ENCODE measurements at regions of chr5 and their contacts with region 1.

Region 1: GRCh38 chr5:29089591-29090130 is 2051.3 kb upstream of the CDH9 start:
- DNase-seq: no peak
- H3K4me3 ChIP-seq: no peak overlapping the region
- H3K27ac ChIP-seq: no peak overlapping the region
- H3K4me1 ChIP-seq: no peaks in the 10 kb centered on the region
- H3K27me3 ChIP-seq: no peaks in the 10 kb centered on the region
- CTCF ChIP-seq: no peak
- EP300 ChIP-seq: no peak
- POLR2A ChIP-seq: no peak

Region 2: GRCh38 chr5:29077451-29077850 is 12.2 kb before region 1 on chr5:
- in situ Hi-C with region 1: no loop called
- intact Hi-C with region 1: loop called (anchors 1 kb)
- DNase-seq: no peak
- H3K4me3 ChIP-seq: no peak overlapping the region
- H3K27ac ChIP-seq: no peak overlapping the region
- H3K4me1 ChIP-seq: no peaks in the 10 kb centered on the region
- H3K27me3 ChIP-seq: no peaks in the 10 kb centered on the region
- CTCF ChIP-seq: no peak
- EP300 ChIP-seq: no peak
- POLR2A ChIP-seq: no peak

Region 3: DNA sequence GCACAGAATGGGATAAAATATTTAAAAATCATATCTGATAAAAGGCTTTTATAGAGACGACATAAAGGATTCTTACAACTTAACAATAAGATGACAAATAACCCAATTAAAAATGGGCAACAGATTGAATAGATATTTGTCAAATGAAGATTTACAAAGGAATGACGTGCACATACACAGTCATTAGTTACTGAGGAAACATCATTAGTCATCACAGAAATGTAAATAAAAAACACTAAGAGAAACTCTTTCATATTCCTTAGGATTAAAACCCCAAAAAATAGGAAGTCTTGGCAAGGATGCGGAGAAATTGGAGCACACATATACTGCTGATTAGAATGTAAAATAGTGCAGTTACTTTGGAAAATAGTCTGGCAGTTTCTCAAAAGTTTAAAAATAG is 217.8 kb after region 1 on chr5:
- in situ Hi-C with region 1: no loop called
- intact Hi-C with region 1: no loop called
- DNase-seq: no peak
- H3K4me3 ChIP-seq: no peak overlapping the region
- H3K27ac ChIP-seq: no peak overlapping the region
- H3K4me1 ChIP-seq: no peaks in the 10 kb centered on the region
- H3K27me3 ChIP-seq: no peaks in the 10 kb centered on the region
- CTCF ChIP-seq: no peak
- EP300 ChIP-seq: no peak
- POLR2A ChIP-seq: no peak

Region 4: DNA sequence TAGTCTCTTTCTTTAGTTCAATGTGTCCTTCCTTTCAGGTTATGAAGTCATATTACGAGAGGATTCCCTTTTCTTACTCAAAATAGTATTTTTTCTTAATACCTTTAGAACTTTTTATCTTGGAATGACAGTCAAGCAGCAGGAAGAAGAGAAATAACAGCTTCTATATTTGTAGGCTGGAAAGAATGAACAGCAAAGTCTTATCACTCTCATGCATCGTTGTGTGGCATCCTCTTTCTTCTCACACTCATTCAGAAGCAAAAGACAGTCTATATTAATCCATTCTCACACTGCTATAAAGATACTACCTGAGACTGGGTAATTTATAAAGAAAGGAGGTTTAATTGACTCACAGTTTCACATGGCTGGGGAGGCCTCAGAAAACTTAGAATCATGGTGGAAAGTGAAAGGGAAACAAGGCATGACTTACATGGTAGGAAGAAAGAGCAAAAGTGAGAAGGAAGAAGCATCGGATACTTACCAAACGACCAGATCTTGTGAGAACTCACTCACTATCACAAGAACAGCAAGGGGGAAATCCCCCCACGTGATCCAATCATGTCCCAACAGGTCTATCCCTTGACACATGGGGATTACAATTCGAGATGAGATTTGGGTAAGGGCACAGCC is 457.7 kb after region 1 on chr5:
- in situ Hi-C with region 1: no loop called
- intact Hi-C with region 1: no loop called
- DNase-seq: no peak
- H3K4me3 ChIP-seq: no peak overlapping the region
- H3K27ac ChIP-seq: no peak overlapping the region
- H3K4me1 ChIP-seq: no peaks in the 10 kb centered on the region
- H3K27me3 ChIP-seq: no peaks in the 10 kb centered on the region
- CTCF ChIP-seq: no peak
- EP300 ChIP-seq: no peak
- POLR2A ChIP-seq: no peak

Measured in transverse colon (tissue), 4 donors.